ENCODE measurements at regions of chr10 and their contacts with region 1.

Region 1: GRCh38 chr10:104121520-104122224 is at the start of gene SFR1:
- DNase-seq: peak; percentile 93
- ATAC-seq: peak; percentile 93
- H3K4me3 ChIP-seq: peak within 1 kb of the TSS; percentile 98
- H3K27ac ChIP-seq: peak within 1 kb of the TSS; percentile 94
- H3K4me1 ChIP-seq: peaks cover 11% of the 10 kb centered on the region; the same call in 1 of the 2 replicates
- H3K27me3 ChIP-seq: no peaks in the 10 kb centered on the region; a peak in 1 of 4 replicates
- CTCF ChIP-seq: peak; percentile 56 to 81 (median 64); a peak in 5 of 6 replicates
- EP300 ChIP-seq: 0 out of 4 replicates have a peak, but pooled peaks of 1 of the 2 experiments have one; percentile 3
- POLR2A ChIP-seq: peak; percentile 87
- RAD21 ChIP-seq: 0 out of 2 replicates have a peak, but pooled peaks have one; percentile 20
- polyA plus RNA-seq, gene SFR1: 25.4 to 31.5 TPM

Region 2: GRCh38 chr10:103918053-103918846 is 203.4 kb before region 1 on chr10 and contains the start of gene STN1:
- CTCF ChIA-PET with region 1: interaction called, 8 read pairs
- POLR2A ChIA-PET with region 1: interaction called, 3 read pairs
- RAD21 ChIA-PET with region 1: interaction called, 6 read pairs
- SMC1A ChIA-PET with region 1: interaction called, 7 read pairs
- in situ Hi-C with region 1: no loop called
- intact Hi-C with region 1: loop called (anchors 5 kb)
- DNase-seq: peak; percentile 77
- ATAC-seq: peak; percentile 96
- H3K4me3 ChIP-seq: peak within 1 kb of the TSS; percentile 83
- H3K27ac ChIP-seq: peak within 1 kb of the TSS; percentile 83
- H3K4me1 ChIP-seq: peaks cover 12% of the 10 kb centered on the region
- H3K27me3 ChIP-seq: no peaks in the 10 kb centered on the region
- CTCF ChIP-seq: 0 out of 6 replicates have a peak, but pooled peaks of 1 of the 3 experiments have one; percentile 3
- EP300 ChIP-seq: 0 out of 4 replicates have a peak, but pooled peaks of 1 of the 2 experiments have one; percentile 14
- POLR2A ChIP-seq: peak; percentile 85
- RAD21 ChIP-seq: no peak
- polyA plus RNA-seq, gene STN1: 26.5 to 27.8 TPM

Region 3: DNA sequence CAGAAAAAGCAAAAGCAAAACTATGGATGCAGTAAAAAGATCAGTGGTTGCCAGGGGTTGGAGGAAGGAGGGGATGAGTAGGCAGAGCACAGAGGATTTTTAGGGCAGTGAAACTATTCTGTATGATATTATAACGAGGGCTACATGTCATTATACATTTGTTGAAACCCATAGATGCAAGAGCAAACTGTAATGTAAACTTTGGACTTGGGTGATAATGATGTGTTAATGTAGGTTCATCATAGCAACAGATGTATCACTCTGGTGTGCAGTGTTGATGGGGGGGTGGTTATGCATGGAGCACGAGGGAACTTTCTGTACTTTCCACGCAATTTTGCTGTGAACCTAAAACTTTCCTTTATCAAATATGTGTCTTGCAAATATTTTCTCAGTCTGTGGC is 131.6 kb before region 1 on chr10:
- CTCF ChIA-PET with region 1: interaction called, 7 read pairs
- POLR2A ChIA-PET with region 1: interaction called, 12 read pairs
- RAD21 ChIA-PET with region 1: interaction called, 25 read pairs
- SMC1A ChIA-PET with region 1: interaction called, 10 read pairs
- in situ Hi-C with region 1: no loop called
- intact Hi-C with region 1: no loop called
- DNase-seq: no peak
- ATAC-seq: peak; percentile 83
- H3K4me3 ChIP-seq: no peak overlapping the region
- H3K27ac ChIP-seq: peak overlapping the region; percentile 20; the same call in 1 of the 2 replicates
- H3K4me1 ChIP-seq: no peaks in the 10 kb centered on the region
- H3K27me3 ChIP-seq: no peaks in the 10 kb centered on the region
- CTCF ChIP-seq: no peak
- EP300 ChIP-seq: peak in 1 of 2 experiments; percentile 65; a peak in 1 of 4 replicates
- POLR2A ChIP-seq: no peak
- RAD21 ChIP-seq: no peak

Region 4: DNA sequence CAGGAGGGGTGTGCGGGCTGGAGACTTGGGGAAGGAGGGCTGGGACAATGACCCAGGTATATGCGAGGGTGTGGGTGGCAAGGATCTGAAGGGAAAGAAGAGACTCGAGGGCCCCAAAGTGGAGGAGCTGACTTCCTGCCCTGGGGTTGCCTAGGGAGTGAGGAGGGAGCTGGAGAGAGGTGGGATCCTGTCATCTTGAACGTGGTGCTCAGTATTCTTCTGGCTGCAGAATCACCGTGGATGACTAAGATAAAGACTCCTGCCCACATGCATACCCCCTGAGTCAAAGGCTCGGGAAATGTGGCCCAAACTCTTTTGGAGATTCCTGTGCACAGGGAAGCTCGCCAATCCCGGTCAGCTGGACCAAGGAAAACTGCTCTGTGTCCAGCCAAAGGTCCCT is 67.2 kb before region 1 on chr10:
- CTCF ChIA-PET with region 1: interaction called, 13 read pairs
- POLR2A ChIA-PET with region 1: interaction called, 3 read pairs
- RAD21 ChIA-PET with region 1: interaction called, 3 read pairs
- SMC1A ChIA-PET with region 1: interaction called, 5 read pairs
- in situ Hi-C with region 1: no loop called
- intact Hi-C with region 1: no loop called
- DNase-seq: no peak
- ATAC-seq: no peak
- H3K4me3 ChIP-seq: no peak overlapping the region
- H3K27ac ChIP-seq: no peak overlapping the region
- H3K4me1 ChIP-seq: no peaks in the 10 kb centered on the region
- H3K27me3 ChIP-seq: peaks cover 0 to under 1% of the 10 kb centered on the region in 2 experiments; a peak in 1 of 4 replicates
- CTCF ChIP-seq: no peak
- EP300 ChIP-seq: no peak
- POLR2A ChIP-seq: no peak
- RAD21 ChIP-seq: no peak

Region 5: DNA sequence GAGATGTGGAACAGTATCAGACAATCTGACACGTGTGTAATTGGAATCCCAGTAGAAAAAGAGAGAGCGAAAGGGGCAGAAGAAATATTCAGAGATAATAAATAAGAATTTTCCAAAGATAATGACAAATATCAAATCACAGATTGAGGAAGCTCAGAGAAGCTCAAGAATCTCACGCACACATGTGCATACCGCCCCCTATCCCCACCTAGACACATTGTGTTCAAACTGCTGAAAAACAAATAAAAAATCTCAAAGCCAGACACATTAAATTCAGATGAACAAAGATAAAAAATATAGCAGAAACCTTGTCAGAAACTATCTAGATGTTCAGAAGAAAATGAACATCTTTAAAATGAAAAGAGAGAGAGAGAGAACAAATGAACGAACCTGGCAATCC is 17.5 kb after region 1 on chr10:
- CTCF ChIA-PET with region 1: interaction called, 24 read pairs
- POLR2A ChIA-PET with region 1: no interaction called
- RAD21 ChIA-PET with region 1: interaction called, 3 read pairs
- SMC1A ChIA-PET with region 1: interaction called, 15 read pairs
- in situ Hi-C with region 1: no loop called
- intact Hi-C with region 1: no loop called
- DNase-seq: no peak
- ATAC-seq: peak; percentile 42; the same call in 1 of the 3 replicates
- H3K4me3 ChIP-seq: no peak overlapping the region
- H3K27ac ChIP-seq: no peak overlapping the region
- H3K4me1 ChIP-seq: no peaks in the 10 kb centered on the region
- H3K27me3 ChIP-seq: no peaks in the 10 kb centered on the region; a peak in 2 of 4 replicates
- CTCF ChIP-seq: peak; percentile 47 to 55 (median 48); a peak in 5 of 6 replicates
- EP300 ChIP-seq: no peak
- POLR2A ChIP-seq: no peak
- RAD21 ChIP-seq: peak; percentile 44; the same call in 1 of the 2 replicates

Region 6: GRCh38 chr10:104190695-104191094 is 69.0 kb after region 1 on chr10:
- CTCF ChIA-PET with region 1: no interaction called
- POLR2A ChIA-PET with region 1: no interaction called
- RAD21 ChIA-PET with region 1: no interaction called
- SMC1A ChIA-PET with region 1: no interaction called
- in situ Hi-C with region 1: no loop called
- intact Hi-C with region 1: no loop called
- DNase-seq: no peak
- ATAC-seq: no peak
- H3K4me3 ChIP-seq: no peak overlapping the region
- H3K27ac ChIP-seq: no peak overlapping the region
- H3K4me1 ChIP-seq: no peaks in the 10 kb centered on the region
- H3K27me3 ChIP-seq: peaks cover 0 to 4% of the 10 kb centered on the region in 2 experiments; a peak in 2 of 4 replicates
- CTCF ChIP-seq: no peak
- EP300 ChIP-seq: no peak
- POLR2A ChIP-seq: no peak
- RAD21 ChIP-seq: no peak

Region 7: GRCh38 chr10:104353325-104354048 is 231.8 kb after region 1 on chr10 and contains the start of gene CFAP58:
- CTCF ChIA-PET with region 1: no interaction called
- POLR2A ChIA-PET with region 1: interaction called, 3 read pairs
- RAD21 ChIA-PET with region 1: no interaction called
- SMC1A ChIA-PET with region 1: interaction called, 3 read pairs
- in situ Hi-C with region 1: no loop called
- intact Hi-C with region 1: loop called (anchors 5 kb)
- DNase-seq: peak; percentile 57
- ATAC-seq: peak; percentile 64
- H3K4me3 ChIP-seq: peak within 1 kb of the TSS; percentile 52
- H3K27ac ChIP-seq: no peak within 1 kb of the TSS
- H3K4me1 ChIP-seq: peaks cover 43% of the 10 kb centered on the region
- H3K27me3 ChIP-seq: no peaks in the 10 kb centered on the region
- CTCF ChIP-seq: peak; percentile 72 to 83 (median 77)
- EP300 ChIP-seq: no peak
- POLR2A ChIP-seq: no peak
- RAD21 ChIP-seq: no peak
- polyA plus RNA-seq, gene CFAP58: 0.03 to 0.11 TPM

Measured in GM12878 (cell line).